CD8-positive, alpha-beta T cell (primary cell): ENCODE measurements at regions of chr19 and their contacts with region 1.

Region 1: DNA sequence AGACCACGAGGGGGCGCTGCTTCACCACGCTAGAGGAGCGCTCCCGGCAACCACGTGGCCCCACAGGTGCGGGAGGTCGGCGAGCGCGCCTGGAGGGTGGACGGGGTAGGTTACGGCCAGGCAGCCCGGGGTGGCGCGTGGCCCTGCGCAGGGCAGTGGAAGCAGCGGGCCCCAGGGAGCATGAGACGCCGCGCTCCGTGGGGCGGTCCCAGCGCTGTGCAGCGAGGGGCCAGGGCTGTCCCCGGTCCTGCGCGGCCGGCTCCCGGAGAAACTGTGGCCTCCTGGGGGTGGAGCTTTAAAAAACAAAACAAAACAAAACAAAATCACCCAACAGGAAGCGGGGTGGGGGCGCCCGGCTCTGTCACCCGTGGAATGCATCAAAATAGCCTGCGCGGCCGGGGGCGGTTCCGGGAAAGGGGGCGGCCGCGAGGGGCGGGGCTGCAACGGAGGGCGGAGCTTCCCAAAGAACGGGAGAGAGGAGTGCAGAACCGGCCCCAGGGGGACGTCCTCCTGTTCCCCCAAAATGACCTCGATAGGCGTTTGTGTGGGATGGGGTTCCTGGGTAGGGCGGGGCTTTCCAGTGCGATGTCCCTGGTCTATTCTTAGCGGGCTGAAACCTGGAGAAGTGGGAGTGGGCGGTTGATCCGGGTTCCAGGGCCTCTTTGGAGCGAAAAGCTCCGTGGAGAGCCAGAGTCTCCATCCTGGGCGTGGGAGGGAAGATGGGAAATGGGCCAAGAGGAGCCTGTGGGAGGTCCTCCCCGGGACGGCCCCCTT is 27.3 kb downstream of the NUMBL start:
- DNase-seq: peak; percentile 86 to 98 (median 94)
- ATAC-seq: peak; percentile 82
- H3K4me3 ChIP-seq: peak overlapping the region; percentile 66 to 67
- H3K4me3 Mint-ChIP-seq: peak overlapping the region; percentile 87
- H3K27ac ChIP-seq: peak overlapping the region; percentile 49 to 70
- H3K27ac Mint-ChIP-seq: peak overlapping the region; percentile 80
- H3K4me1 ChIP-seq: peaks cover 11% of the 10 kb centered on the region
- H3K4me1 Mint-ChIP-seq: peaks cover 8% of the 10 kb centered on the region
- H3K27me3 ChIP-seq: no peaks in the 10 kb centered on the region
- H3K27me3 Mint-ChIP-seq: no peaks in the 10 kb centered on the region
- CTCF ChIP-seq: peak; percentile 95

Region 2: DNA sequence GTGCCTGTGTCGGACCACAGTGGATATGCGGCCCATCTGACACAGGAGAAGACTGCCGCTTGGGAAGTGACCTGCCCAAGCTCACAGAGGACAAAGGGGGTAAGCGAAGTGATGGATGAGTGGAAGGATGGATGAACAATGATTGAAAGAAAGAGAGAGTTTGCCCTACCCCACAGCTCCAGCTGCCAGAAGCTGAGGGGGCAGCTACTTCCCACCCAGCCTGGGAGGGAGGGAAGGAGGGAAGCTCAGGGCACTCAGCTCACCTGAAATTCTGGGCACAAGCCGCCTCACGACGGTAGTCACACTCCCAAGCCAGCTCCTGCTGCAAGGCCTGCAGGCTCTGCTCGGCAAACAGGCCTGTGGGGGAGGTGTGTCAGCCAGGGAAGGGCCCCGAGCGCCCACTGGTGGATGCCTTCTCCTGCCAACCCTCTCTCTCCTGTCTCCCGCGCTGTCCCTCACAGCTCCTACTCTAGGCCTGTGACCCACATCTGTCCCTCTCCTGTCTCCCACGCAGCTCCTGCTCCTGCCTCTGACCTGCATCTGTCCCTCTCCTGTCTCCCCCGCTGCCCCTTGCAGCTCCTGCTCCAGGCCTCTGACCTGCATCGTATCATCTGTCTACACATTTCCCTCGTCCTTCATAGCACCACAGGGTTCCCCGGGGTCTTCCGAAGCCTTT is 39.4 kb after region 1 on chr19:
- CTCF ChIA-PET with region 1: no interaction called
- POLR2A ChIA-PET with region 1: no interaction called
- intact Hi-C with region 1: no loop called
- DNase-seq: no peak
- ATAC-seq: no peak
- H3K4me3 ChIP-seq: no peak overlapping the region
- H3K4me3 Mint-ChIP-seq: no peak overlapping the region
- H3K27ac ChIP-seq: no peak overlapping the region
- H3K27ac Mint-ChIP-seq: no peak overlapping the region
- H3K4me1 ChIP-seq: no peaks in the 10 kb centered on the region
- H3K4me1 Mint-ChIP-seq: no peaks in the 10 kb centered on the region
- H3K27me3 ChIP-seq: no peaks in the 10 kb centered on the region
- H3K27me3 Mint-ChIP-seq: no peaks in the 10 kb centered on the region
- CTCF ChIP-seq: no peak

Region 3: DNA sequence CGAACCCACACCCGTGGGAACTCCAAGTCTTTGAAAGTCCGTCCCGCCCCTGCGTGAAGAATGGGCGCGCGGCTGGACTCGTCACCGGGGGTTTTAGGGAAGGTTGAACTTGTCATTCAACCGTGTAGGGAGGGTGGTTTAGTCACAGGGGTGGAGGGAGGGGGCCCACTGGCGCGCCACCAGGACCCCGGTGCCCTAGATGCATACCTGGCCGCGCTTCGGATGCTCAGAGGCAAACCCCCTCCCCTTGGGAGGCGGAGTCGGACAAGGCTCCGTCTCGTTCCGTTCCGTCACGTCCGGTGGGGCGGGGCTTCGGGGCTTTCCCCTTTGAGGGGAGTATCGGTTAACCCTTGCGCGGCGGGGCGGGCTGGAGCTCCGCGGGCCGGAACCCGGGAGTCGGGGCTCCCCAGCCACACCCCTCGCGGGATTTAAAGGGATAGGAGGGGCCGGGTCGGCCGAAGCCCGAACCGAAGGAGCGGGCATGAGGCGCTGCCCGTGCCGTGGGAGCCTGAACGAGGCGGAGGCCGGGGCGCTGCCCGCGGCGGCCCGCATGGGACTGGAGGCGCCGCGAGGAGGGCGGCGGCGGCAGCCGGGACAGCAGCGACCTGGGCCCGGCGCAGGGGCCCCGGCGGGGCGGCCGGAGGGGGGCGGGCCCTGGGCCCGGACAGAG is 53.7 kb after region 1 on chr19 and contains the starts of genes COQ8B and ITPKC:
- CTCF ChIA-PET with region 1: interaction called, 4 read pairs
- POLR2A ChIA-PET with region 1: no interaction called
- intact Hi-C with region 1: loop called (anchors 1 to 2 kb)
- DNase-seq: peak; percentile 98 to 100 (median 100)
- ATAC-seq: peak; percentile 74
- H3K4me3 ChIP-seq: peak within 1 kb of the TSS; percentile 66 to 93
- H3K4me3 Mint-ChIP-seq: peak within 1 kb of the TSS; percentile 88
- H3K27ac ChIP-seq: peak within 1 kb of the TSS; percentile 88 to 89
- H3K27ac Mint-ChIP-seq: peak within 1 kb of the TSS; percentile 97
- H3K4me1 ChIP-seq: peaks cover 61% of the 10 kb centered on the region
- H3K4me1 Mint-ChIP-seq: peaks cover 70% of the 10 kb centered on the region
- H3K27me3 ChIP-seq: no peaks in the 10 kb centered on the region
- H3K27me3 Mint-ChIP-seq: no peaks in the 10 kb centered on the region
- CTCF ChIP-seq: no peak
- total RNA-seq, gene COQ8B: 14.0 to 14.2 TPM
- total RNA-seq, gene ITPKC: 5.9 to 6.4 TPM

Region 4: DNA sequence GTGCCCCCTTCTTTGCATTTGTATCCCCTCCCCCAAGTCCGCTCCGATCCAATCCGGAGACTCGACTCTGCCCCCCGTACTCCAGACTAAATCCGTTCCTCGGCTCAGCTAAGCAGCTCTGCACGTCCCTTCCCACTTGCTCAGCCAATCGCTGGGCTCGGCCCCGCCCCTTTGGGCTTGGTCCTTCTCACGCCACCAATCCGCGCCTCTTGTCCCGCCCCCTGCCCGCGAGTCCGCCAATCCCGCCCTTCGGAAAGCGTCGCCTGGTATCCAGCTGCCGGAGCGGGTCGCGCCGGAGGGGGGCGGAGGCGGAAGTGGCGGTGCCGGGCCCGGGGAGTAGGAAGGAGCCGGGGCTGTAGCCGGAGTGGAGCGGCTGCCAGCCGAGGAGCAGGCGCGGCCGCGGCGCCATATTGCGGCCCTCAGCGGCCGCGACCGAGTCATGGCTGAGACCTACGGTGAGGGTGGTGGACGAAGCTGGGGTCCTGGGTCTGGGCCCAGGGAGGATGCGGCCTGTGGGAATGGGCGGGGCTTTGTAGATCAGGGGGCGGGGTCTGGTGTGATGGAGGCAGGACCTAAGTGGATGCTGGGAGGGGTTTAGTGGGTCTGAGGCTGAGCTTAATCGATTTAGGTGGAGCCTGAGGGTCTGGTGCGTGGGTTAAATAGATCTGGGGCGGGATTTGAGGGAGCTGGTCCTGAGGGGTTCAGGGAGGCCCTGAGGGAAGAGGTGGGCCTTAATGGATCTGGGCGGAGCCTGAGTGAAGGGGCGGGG is 115.0 kb after region 1 on chr19 and contains the start of gene RAB4B:
- CTCF ChIA-PET with region 1: interaction called, 13 read pairs
- POLR2A ChIA-PET with region 1: interaction called, 10 read pairs
- intact Hi-C with region 1: loop called in 1 of 2 experiments (anchors 1 kb)
- DNase-seq: peak; percentile 100
- ATAC-seq: peak; percentile 83
- H3K4me3 ChIP-seq: peak within 1 kb of the TSS; percentile 87 to 89
- H3K4me3 Mint-ChIP-seq: peak within 1 kb of the TSS; percentile 92
- H3K27ac ChIP-seq: peak within 1 kb of the TSS; percentile 93 to 98
- H3K27ac Mint-ChIP-seq: peak within 1 kb of the TSS; percentile 95
- H3K4me1 ChIP-seq: peaks cover 26% of the 10 kb centered on the region
- H3K4me1 Mint-ChIP-seq: peaks cover 37% of the 10 kb centered on the region
- H3K27me3 ChIP-seq: no peaks in the 10 kb centered on the region
- H3K27me3 Mint-ChIP-seq: no peaks in the 10 kb centered on the region
- CTCF ChIP-seq: no peak
- total RNA-seq, gene RAB4B: 19.9 to 21.3 TPM

Region 5: GRCh38 chr19:40822161-40822560 is 159.1 kb after region 1 on chr19:
- CTCF ChIA-PET with region 1: interaction called, 34 read pairs
- POLR2A ChIA-PET with region 1: no interaction called
- intact Hi-C with region 1: loop called (anchors 1 kb)
- DNase-seq: no peak
- ATAC-seq: no peak
- H3K4me3 ChIP-seq: no peak overlapping the region
- H3K4me3 Mint-ChIP-seq: no peak overlapping the region
- H3K27ac ChIP-seq: no peak overlapping the region
- H3K27ac Mint-ChIP-seq: no peak overlapping the region
- H3K4me1 ChIP-seq: peaks cover 36% of the 10 kb centered on the region
- H3K4me1 Mint-ChIP-seq: peaks cover 38% of the 10 kb centered on the region
- H3K27me3 ChIP-seq: no peaks in the 10 kb centered on the region
- H3K27me3 Mint-ChIP-seq: no peaks in the 10 kb centered on the region
- CTCF ChIP-seq: no peak

Region 6: GRCh38 chr19:41144403-41144802 is 481.3 kb after region 1 on chr19:
- CTCF ChIA-PET with region 1: interaction called, 46 read pairs
- POLR2A ChIA-PET with region 1: no interaction called
- intact Hi-C with region 1: loop called in 1 of 2 experiments (anchors 1 kb)
- DNase-seq: peak; percentile 79 to 94 (median 90)
- ATAC-seq: peak; percentile 95
- H3K4me3 ChIP-seq: no peak overlapping the region
- H3K4me3 Mint-ChIP-seq: no peak overlapping the region
- H3K27ac ChIP-seq: no peak overlapping the region
- H3K27ac Mint-ChIP-seq: no peak overlapping the region
- H3K4me1 ChIP-seq: no peaks in the 10 kb centered on the region
- H3K4me1 Mint-ChIP-seq: peaks cover 2% of the 10 kb centered on the region
- H3K27me3 ChIP-seq: peaks cover 0 to 6% of the 10 kb centered on the region in 2 experiments
- H3K27me3 Mint-ChIP-seq: peaks cover 10% of the 10 kb centered on the region
- CTCF ChIP-seq: peak; percentile 81